WTC11 (cell line): ENCODE measurements at regions of chr11 and their contacts with region 1.

Region 1: GRCh38 chr11:76721755-76722677 is 51.5 kb upstream of the LRRC32 start:
- DNase-seq: peak; percentile 88
- ATAC-seq: peak; percentile 94
- H3K4me3 Mint-ChIP-seq: peak overlapping the region; percentile 39
- H3K27ac Mint-ChIP-seq: no peak overlapping the region
- H3K4me1 Mint-ChIP-seq: peaks cover 5% of the 10 kb centered on the region
- H3K27me3 Mint-ChIP-seq: peaks cover 22% of the 10 kb centered on the region
- CTCF ChIP-seq: peak; percentile 79

Region 2: GRCh38 chr11:76598426-76598839 is 123.6 kb before region 1 on chr11:
- CTCF ChIA-PET with region 1: interaction called, 18 read pairs
- POLR2A ChIA-PET with region 1: no interaction called
- DNase-seq: peak; percentile 47
- ATAC-seq: peak; percentile 85
- H3K4me3 Mint-ChIP-seq: no peak overlapping the region
- H3K27ac Mint-ChIP-seq: no peak overlapping the region
- H3K4me1 Mint-ChIP-seq: 0 out of 2 replicates have a peak, but pooled peaks cover 7% of the 10 kb centered on the region
- H3K27me3 Mint-ChIP-seq: no peaks in the 10 kb centered on the region
- CTCF ChIP-seq: 0 out of 2 replicates have a peak, but pooled peaks have one; percentile 10

Region 3: GRCh38 chr11:76700177-76701100 is 21.6 kb before region 1 on chr11:
- CTCF ChIA-PET with region 1: interaction called, 50 read pairs
- POLR2A ChIA-PET with region 1: no interaction called
- DNase-seq: no peak
- ATAC-seq: no peak
- H3K4me3 Mint-ChIP-seq: no peak overlapping the region
- H3K27ac Mint-ChIP-seq: no peak overlapping the region
- H3K4me1 Mint-ChIP-seq: peaks cover 47% of the 10 kb centered on the region
- H3K27me3 Mint-ChIP-seq: no peaks in the 10 kb centered on the region
- CTCF ChIP-seq: no peak

Region 4: GRCh38 chr11:76752321-76753185 is 30.5 kb after region 1 on chr11:
- CTCF ChIA-PET with region 1: interaction called, 14 read pairs
- POLR2A ChIA-PET with region 1: no interaction called
- DNase-seq: no peak
- ATAC-seq: peak; percentile 81
- H3K4me3 Mint-ChIP-seq: no peak overlapping the region
- H3K27ac Mint-ChIP-seq: peak overlapping the region; percentile 18; the same call in 1 of the 2 replicates
- H3K4me1 Mint-ChIP-seq: peaks cover 29% of the 10 kb centered on the region
- H3K27me3 Mint-ChIP-seq: peaks cover 4% of the 10 kb centered on the region
- CTCF ChIP-seq: no peak

Region 5: GRCh38 chr11:76799066-76799804 is 77.2 kb after region 1 on chr11:
- CTCF ChIA-PET with region 1: interaction called, 31 read pairs
- POLR2A ChIA-PET with region 1: no interaction called
- DNase-seq: peak; percentile 92
- ATAC-seq: peak; percentile 90
- H3K4me3 Mint-ChIP-seq: peak overlapping the region; percentile 55
- H3K27ac Mint-ChIP-seq: no peak overlapping the region
- H3K4me1 Mint-ChIP-seq: peaks cover 18% of the 10 kb centered on the region
- H3K27me3 Mint-ChIP-seq: no peaks in the 10 kb centered on the region
- CTCF ChIP-seq: peak; percentile 84

Region 6: GRCh38 chr11:77039491-77040400 is 317.7 kb after region 1 on chr11:
- CTCF ChIA-PET with region 1: interaction called, 15 read pairs
- POLR2A ChIA-PET with region 1: no interaction called
- DNase-seq: peak; percentile 71
- ATAC-seq: peak; percentile 68
- H3K4me3 Mint-ChIP-seq: peak overlapping the region; percentile 44
- H3K27ac Mint-ChIP-seq: no peak overlapping the region
- H3K4me1 Mint-ChIP-seq: peaks cover 7% of the 10 kb centered on the region
- H3K27me3 Mint-ChIP-seq: peaks cover 52% of the 10 kb centered on the region
- CTCF ChIP-seq: peak; percentile 52; the same call in 1 of the 2 replicates